Colonic mucosa (tissue), 4 donors: ENCODE measurements at regions of chr2 and their contacts with region 1.

Region 1: GRCh38 chr2:218876562-218877219 is 4.0 kb upstream of the WNT10A start:
- DNase-seq: peak; percentile 67
- H3K4me3 ChIP-seq: no peak overlapping the region
- H3K27ac ChIP-seq: no peak overlapping the region
- H3K4me1 ChIP-seq: no peaks in the 10 kb centered on the region
- H3K27me3 ChIP-seq: peaks cover 73% of the 10 kb centered on the region
- CTCF ChIP-seq: peak; percentile 93

Region 2: GRCh38 chr2:218622606-218623365 is 253.9 kb before region 1 on chr2:
- intact Hi-C with region 1: no loop called
- DNase-seq: no peak
- H3K4me3 ChIP-seq: no peak overlapping the region
- H3K27ac ChIP-seq: no peak overlapping the region
- H3K4me1 ChIP-seq: no peaks in the 10 kb centered on the region
- H3K27me3 ChIP-seq: no peaks in the 10 kb centered on the region
- CTCF ChIP-seq: no peak

Region 3: GRCh38 chr2:218898109-218898878 is 21.6 kb after region 1 on chr2:
- intact Hi-C with region 1: loop called (anchors 2 kb)
- DNase-seq: peak; percentile 75
- H3K4me3 ChIP-seq: no peak overlapping the region
- H3K27ac ChIP-seq: no peak overlapping the region
- H3K4me1 ChIP-seq: peaks cover 14% of the 10 kb centered on the region
- H3K27me3 ChIP-seq: peaks cover 48% of the 10 kb centered on the region
- CTCF ChIP-seq: peak; percentile 96

Region 4: GRCh38 chr2:218979846-218980734 is 103.4 kb after region 1 on chr2:
- intact Hi-C with region 1: loop called (anchors 5 kb)
- DNase-seq: peak; percentile 87
- H3K4me3 ChIP-seq: no peak overlapping the region
- H3K27ac ChIP-seq: no peak overlapping the region
- H3K4me1 ChIP-seq: peaks cover 9% of the 10 kb centered on the region
- H3K27me3 ChIP-seq: peaks cover 53% of the 10 kb centered on the region
- CTCF ChIP-seq: peak; percentile 89